ENCODE measurements at regions of chr18 and their contacts with region 1.

Region 1: GRCh38 chr18:57446322-57446721 is 11.1 kb downstream of the ONECUT2 start:
- DNase-seq: peak; percentile 60
- ATAC-seq: no peak
- H3K4me3 Mint-ChIP-seq: no peak overlapping the region
- H3K27ac Mint-ChIP-seq: no peak overlapping the region
- H3K4me1 Mint-ChIP-seq: peaks cover 4% of the 10 kb centered on the region
- H3K27me3 Mint-ChIP-seq: peaks cover 52% of the 10 kb centered on the region

Region 2: DNA sequence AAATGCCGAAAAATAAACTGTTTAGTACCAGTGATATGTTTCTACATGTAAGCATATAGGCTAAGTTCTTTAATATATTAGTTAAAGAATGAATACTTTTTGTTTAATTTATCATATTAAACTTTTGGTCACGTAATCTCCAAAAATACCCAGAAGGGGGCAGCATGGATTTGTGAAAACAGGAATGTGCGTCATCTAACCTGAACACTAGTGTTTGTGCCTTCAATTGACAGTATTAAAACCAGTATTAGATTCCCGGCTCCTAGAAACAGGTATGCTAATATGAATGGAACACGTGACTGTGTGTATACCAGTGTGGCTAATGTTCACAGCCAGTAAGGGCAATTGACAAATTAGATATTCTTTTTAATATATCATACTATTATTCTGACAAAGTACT is 743.4 kb before region 1 on chr18:
- CTCF ChIA-PET with region 1: no interaction called
- POLR2A ChIA-PET with region 1: no interaction called
- intact Hi-C with region 1: loop called in 1 of 2 experiments (anchors 2 kb)
- DNase-seq: peak; percentile 23
- ATAC-seq: peak; percentile 36
- H3K4me3 Mint-ChIP-seq: no peak overlapping the region
- H3K27ac Mint-ChIP-seq: no peak overlapping the region
- H3K4me1 Mint-ChIP-seq: no peaks in the 10 kb centered on the region
- H3K27me3 Mint-ChIP-seq: no peaks in the 10 kb centered on the region

Region 3: DNA sequence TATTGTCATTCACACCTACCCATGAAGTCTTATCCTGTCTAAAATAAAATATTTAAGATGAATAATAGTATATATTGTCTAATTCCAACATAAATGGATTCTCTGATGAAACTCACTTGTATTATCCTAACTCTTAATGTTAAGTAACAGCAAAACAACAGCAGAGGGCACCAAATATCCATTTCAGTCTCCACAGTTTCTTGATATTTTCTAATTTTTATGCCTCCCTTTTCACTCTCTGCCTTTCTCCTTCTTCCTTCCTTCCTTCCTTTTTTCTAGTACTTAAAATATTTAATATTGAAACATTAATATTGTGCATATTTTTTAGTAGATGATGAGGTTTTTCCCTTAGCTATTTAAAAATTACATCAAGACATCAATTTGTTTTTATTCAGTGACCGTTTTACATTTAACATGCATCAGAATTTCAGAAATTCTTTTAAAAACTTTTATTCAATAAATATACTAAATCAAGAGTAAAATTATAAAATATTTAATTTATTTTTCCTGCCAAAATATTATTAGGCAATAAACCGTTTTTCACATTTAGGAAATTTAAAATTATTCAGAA is 697.5 kb before region 1 on chr18:
- CTCF ChIA-PET with region 1: interaction called, 3 read pairs
- POLR2A ChIA-PET with region 1: no interaction called
- intact Hi-C with region 1: loop called (anchors 1 kb)
- DNase-seq: no peak
- ATAC-seq: no peak
- H3K4me3 Mint-ChIP-seq: no peak overlapping the region
- H3K27ac Mint-ChIP-seq: no peak overlapping the region
- H3K4me1 Mint-ChIP-seq: peaks cover 24% of the 10 kb centered on the region
- H3K27me3 Mint-ChIP-seq: no peaks in the 10 kb centered on the region

Region 4: DNA sequence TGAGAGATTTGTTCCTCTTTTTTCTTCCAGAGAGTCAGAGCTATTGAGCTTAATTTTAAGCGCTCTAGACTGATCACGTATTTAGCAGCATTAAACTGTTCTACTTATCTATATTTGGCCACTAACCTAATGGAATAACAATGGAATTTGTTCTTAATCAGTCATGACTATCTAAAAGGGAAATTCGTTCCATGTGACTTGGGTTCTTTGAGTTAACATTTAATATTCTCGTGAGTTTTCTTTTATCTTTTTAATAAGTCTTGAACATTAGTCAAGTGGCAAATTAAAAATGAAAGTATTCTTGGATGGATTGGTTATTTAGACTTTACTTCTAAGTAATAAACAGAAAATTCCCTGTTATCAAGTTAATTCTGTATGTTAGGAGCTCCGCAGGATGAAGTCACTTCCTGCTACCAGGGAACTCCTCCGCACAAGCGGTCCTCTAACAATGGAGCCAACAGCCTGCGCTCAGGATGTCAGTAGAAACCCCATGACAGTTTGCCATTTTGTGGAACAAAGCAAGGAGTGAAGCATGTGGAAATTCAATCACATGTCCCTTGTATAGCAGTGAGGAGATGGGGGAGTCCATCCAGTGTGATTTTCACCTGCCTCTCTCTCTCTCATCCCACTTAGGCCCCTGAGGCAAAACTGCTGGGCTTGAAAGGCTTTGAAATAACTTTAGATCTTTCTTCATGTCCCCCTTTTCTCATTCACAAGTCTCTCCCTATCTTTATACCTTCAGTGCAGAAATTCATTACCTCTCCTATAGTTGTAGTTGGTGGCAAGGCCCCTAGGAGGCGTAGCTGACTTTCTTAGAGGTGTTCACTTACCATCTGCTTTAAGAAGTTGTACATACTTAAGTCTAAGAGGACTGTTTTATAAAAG is 657.1 kb before region 1 on chr18:
- CTCF ChIA-PET with region 1: no interaction called
- POLR2A ChIA-PET with region 1: no interaction called
- intact Hi-C with region 1: loop called (anchors 1 to 2 kb)
- DNase-seq: peak; percentile 57
- ATAC-seq: no peak
- H3K4me3 Mint-ChIP-seq: no peak overlapping the region
- H3K27ac Mint-ChIP-seq: no peak overlapping the region
- H3K4me1 Mint-ChIP-seq: no peaks in the 10 kb centered on the region
- H3K27me3 Mint-ChIP-seq: no peaks in the 10 kb centered on the region

Region 5: DNA sequence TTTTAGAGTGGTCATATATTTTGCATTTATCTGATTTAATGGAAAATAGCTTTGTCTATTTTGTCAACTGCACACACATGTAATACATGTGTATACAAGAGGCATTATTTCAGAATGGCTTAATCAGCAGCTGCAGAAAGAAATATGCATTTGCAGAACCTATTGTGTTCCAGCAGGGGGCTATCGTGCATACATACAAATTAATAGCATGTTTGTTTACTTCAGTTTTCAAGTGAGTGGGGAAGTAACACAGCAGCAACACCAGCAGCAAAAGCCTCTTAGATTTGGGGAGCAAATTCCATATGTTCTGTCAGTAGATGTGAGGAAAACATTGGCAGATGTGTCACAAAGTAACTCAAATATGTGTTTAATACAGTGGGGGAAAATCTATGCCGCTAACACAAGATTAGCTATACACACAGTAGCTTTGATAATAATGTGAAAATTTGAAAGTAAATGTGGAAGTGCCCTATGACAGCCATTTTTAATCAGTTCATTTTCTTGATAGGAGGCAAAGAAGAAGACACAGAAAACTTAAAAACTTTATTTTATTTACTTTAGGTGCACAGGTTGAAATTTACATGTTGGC is 577.0 kb before region 1 on chr18:
- CTCF ChIA-PET with region 1: interaction called, 3 read pairs
- POLR2A ChIA-PET with region 1: no interaction called
- intact Hi-C with region 1: loop called in 1 of 2 experiments (anchors 10 kb)
- DNase-seq: peak; percentile 11
- ATAC-seq: no peak
- H3K4me3 Mint-ChIP-seq: no peak overlapping the region
- H3K27ac Mint-ChIP-seq: no peak overlapping the region
- H3K4me1 Mint-ChIP-seq: peaks cover 15% of the 10 kb centered on the region
- H3K27me3 Mint-ChIP-seq: no peaks in the 10 kb centered on the region

Measured in activated CD4-positive, alpha-beta T cell treated with anti-CD3 and anti-CD28 coated beads for 36 hours (primary cell).